ENCODE measurements at regions of chr16 and their contacts with region 1.

Region 1: DNA sequence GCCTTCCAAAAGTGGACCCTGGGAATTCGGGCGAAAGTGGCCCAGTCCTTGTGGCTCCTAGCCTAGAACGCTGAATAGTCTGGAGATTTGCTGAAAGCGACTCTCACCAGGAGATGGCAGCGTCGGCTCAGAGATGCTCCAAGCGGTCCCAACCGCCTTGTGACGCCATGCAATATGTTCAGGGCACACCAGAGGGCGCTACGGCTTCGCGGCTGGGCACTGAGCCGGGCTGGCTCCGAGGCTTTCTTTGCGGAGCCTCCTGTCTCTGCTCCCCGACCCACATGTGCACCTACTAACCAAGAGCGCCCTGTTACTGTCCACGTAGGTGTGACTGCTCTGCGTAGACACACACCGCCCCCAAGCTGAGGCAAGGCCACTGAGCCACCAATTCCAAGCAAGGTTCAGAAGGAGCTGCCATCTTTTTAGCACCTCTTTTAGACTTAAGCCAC is 36.9 kb downstream of the SYCE1L start:
- DNase-seq: peak; percentile 94
- H3K4me3 ChIP-seq: peak overlapping the region in 1 of 8 donors; percentile 41
- H3K27ac ChIP-seq: no peak overlapping the region
- H3K4me1 ChIP-seq: peaks cover 0 to 8% (median 6%) of the 10 kb centered on the region in 6 donors
- H3K27me3 ChIP-seq: peaks cover 0 to 35% (median 3%) of the 10 kb centered on the region in 7 donors
- CTCF ChIP-seq: peak; percentile 96 to 99 (median 98)
- POLR2A ChIP-seq: no peak

Region 2: GRCh38 chr16:77344341-77344740 is 108.3 kb after region 1 on chr16:
- intact Hi-C with region 1: no loop called
- DNase-seq: no peak
- H3K4me3 ChIP-seq: no peak overlapping the region
- H3K27ac ChIP-seq: no peak overlapping the region
- H3K4me1 ChIP-seq: no peaks in the 10 kb centered on the region
- H3K27me3 ChIP-seq: no peaks in the 10 kb centered on the region
- CTCF ChIP-seq: no peak
- POLR2A ChIP-seq: no peak

Region 3: DNA sequence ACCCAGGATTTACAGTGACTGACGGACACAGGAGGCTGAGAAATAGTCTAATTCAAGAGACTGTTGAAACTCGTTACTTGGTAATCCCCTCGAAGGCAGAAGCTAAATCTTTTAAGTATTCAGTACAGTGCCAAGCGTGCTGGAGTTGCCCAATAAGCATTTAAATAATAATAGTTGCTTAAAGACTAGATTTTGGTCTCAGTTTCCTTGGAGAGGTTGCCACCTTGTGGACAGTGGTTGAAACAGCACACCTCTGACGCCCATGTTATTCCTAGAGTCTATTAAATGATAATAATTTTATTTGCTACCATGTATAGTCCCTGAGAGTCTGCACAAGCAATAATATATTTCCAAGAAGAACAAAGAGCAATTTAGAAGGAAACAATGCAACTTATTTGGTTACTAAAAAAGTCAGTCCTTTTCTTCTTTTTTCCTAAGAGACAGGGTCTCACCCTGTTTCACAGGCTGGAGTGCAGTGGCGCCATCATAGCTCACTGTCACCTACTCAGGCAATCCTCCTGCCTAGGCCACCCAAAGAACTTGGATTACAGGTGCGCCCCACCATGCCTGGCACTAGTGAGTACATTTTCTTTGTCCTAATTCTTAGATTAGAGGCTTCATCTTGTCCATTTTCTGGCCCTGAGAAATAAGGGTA is 348.2 kb after region 1 on chr16:
- intact Hi-C with region 1: loop called (anchors 5 kb)
- DNase-seq: no peak
- H3K4me3 ChIP-seq: no peak overlapping the region
- H3K27ac ChIP-seq: no peak overlapping the region
- H3K4me1 ChIP-seq: no peaks in the 10 kb centered on the region
- H3K27me3 ChIP-seq: peaks cover 0 to 53% (median 0%) of the 10 kb centered on the region in 7 donors
- CTCF ChIP-seq: peak; percentile 53 to 88 (median 80)
- POLR2A ChIP-seq: no peak